ENCODE measurements at regions of chr1 and their contacts with region 1.

Region 1: DNA sequence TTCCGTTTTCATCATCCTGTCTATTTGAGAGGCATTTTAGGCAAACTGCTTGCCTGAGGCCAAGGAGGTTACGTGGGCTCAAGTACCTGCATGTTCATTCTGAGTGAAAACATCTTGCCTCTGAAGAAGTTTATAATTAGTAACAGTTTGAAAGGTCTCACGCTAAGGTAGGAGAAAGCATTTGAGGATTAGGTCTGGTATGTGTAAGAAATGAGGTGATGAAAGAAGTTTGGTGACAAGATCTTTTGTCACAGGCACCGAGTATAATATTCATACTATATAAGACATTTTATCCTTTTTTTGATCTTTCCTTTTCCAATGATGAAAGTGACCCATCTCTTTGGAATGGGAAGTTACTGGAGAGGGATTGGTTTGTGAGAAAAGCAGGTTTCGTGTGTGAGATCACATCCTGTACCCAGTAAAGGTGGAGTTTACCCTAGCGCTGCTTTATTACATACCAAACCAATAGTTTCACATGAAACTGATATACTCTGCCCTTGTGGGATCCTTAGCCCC is 98.7 kb upstream of the PDC start:
- DNase-seq: no peak
- H3K4me3 Mint-ChIP-seq: no peak overlapping the region
- H3K27ac Mint-ChIP-seq: no peak overlapping the region
- H3K4me1 Mint-ChIP-seq: no peaks in the 10 kb centered on the region
- H3K27me3 Mint-ChIP-seq: peaks cover 7% of the 10 kb centered on the region

Region 2: DNA sequence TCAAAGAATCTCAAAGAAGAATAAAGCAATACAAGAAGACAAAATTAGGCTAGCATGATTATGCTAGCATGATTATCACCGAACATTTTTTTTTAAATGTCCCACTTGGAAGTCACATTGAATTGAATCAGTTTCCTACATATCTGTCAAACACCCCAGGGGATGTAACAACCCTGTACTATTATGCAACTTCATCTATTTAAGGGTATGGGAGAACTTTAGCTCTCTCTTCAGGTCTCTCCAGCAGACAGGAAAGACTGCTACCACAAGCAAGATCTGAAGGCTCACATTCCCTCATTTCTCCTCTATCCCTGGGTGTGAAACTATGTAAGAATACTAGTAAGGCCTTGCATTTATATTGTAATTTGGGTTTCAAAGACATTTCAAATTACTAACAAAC is 1857.8 kb before region 1 on chr1:
- intact Hi-C with region 1: loop called (anchors 10 kb)
- DNase-seq: no peak
- H3K4me3 Mint-ChIP-seq: no peak overlapping the region
- H3K27ac Mint-ChIP-seq: no peak overlapping the region
- H3K4me1 Mint-ChIP-seq: no peaks in the 10 kb centered on the region
- H3K27me3 Mint-ChIP-seq: no peaks in the 10 kb centered on the region

Region 3: GRCh38 chr1:186026946-186027345 is 532.7 kb before region 1 on chr1:
- intact Hi-C with region 1: no loop called
- DNase-seq: no peak
- H3K4me3 Mint-ChIP-seq: no peak overlapping the region
- H3K27ac Mint-ChIP-seq: no peak overlapping the region
- H3K4me1 Mint-ChIP-seq: no peaks in the 10 kb centered on the region
- H3K27me3 Mint-ChIP-seq: no peaks in the 10 kb centered on the region

Measured in activated T-helper 1 cell treated with anti-CD3 and anti-CD28 coated beads, Interleukin-12 subunit alpha, Interleukin-12 subunit beta, Interleukin-2, Interleukin-4 antibody, amounts not matched to agents 30 ng/mL and 10 ng/mL and 1 ng/mL, durations not matched to agents 14 hours and 24 hours and 36 hours (primary cell).